ENCODE measurements at regions of chr2 and their contacts with region 1.

Region 1: GRCh38 chr2:38106405-38107094 is 30.6 kb upstream of the CYP1B1 start:
- DNase-seq: no peak
- H3K4me3 Mint-ChIP-seq: peak overlapping the region; percentile 53
- H3K27ac Mint-ChIP-seq: peak overlapping the region; percentile 57
- H3K4me1 Mint-ChIP-seq: peaks cover 27% of the 10 kb centered on the region
- H3K27me3 Mint-ChIP-seq: no peaks in the 10 kb centered on the region

Region 2: GRCh38 chr2:38037757-38038621 is 68.6 kb before region 1 on chr2:
- intact Hi-C with region 1: loop called (anchors 5 kb)
- DNase-seq: peak; percentile 5
- H3K4me3 Mint-ChIP-seq: peak overlapping the region; percentile 71
- H3K27ac Mint-ChIP-seq: peak overlapping the region; percentile 91
- H3K4me1 Mint-ChIP-seq: peaks cover 22% of the 10 kb centered on the region
- H3K27me3 Mint-ChIP-seq: peaks cover 22% of the 10 kb centered on the region

Region 3: GRCh38 chr2:38095996-38096861 is 10.3 kb before region 1 on chr2:
- intact Hi-C with region 1: loop called (anchors 1 kb)
- DNase-seq: no peak
- H3K4me3 Mint-ChIP-seq: no peak overlapping the region
- H3K27ac Mint-ChIP-seq: peak overlapping the region; percentile 29
- H3K4me1 Mint-ChIP-seq: peaks cover 63% of the 10 kb centered on the region
- H3K27me3 Mint-ChIP-seq: peaks cover 41% of the 10 kb centered on the region

Region 4: GRCh38 chr2:38146275-38146906 is 39.8 kb after region 1 on chr2:
- intact Hi-C with region 1: loop called (anchors 5 kb)
- DNase-seq: no peak
- H3K4me3 Mint-ChIP-seq: no peak overlapping the region
- H3K27ac Mint-ChIP-seq: peak overlapping the region; percentile 41
- H3K4me1 Mint-ChIP-seq: peaks cover 8% of the 10 kb centered on the region
- H3K27me3 Mint-ChIP-seq: peaks cover 4% of the 10 kb centered on the region

Region 5: DNA sequence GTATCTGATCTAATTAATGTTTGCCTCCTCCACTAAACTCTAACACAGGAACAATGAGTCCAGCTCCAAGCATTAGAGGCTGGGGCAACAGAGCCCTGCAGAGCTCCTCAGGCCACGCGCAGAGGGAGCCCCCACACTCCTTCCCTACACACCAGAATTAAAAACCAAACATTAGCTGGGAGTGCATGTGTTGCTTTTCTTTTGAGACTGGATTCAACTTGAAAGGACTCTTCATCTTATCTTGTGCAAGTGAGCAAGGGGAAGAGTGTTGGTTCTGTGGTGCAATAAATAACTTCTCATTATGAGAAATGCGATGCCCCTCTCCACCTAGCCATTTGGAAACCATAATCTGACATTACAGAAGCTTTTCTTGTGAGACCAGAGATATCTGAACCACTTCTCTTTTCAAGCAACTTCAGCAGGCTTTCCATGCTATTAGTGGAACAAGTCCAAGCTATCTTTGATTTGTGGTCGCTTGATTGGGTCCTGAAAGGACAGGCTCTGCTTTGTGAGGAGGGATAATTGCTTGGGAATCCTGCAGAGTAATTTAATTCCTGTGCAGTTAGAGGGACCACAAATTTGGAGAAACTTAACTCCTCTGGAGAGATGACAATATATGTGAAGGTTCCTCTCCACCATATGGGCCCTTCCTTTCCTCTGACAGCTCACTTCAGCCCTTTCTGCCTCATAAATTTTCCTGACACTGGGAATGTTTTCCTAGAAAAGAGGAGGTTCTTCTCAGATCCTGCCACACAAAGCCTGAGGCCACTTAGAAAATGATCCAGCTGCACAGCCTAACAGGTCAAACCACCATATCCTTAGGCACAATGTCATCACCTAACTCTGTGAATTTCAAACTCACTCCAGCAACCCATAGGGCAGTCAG is 158.1 kb after region 1 on chr2:
- intact Hi-C with region 1: loop called (anchors 5 kb)
- DNase-seq: no peak
- H3K4me3 Mint-ChIP-seq: no peak overlapping the region
- H3K27ac Mint-ChIP-seq: no peak overlapping the region
- H3K4me1 Mint-ChIP-seq: peaks cover 35% of the 10 kb centered on the region
- H3K27me3 Mint-ChIP-seq: peaks cover 2% of the 10 kb centered on the region